Posterior cingulate gyrus (tissue), 11 donors: ENCODE measurements at regions of chr3 and their contacts with region 1.

Region 1: GRCh38 chr3:189961525-189962161 is 159.1 kb downstream of the P3H2 start:
- DNase-seq: peak; percentile 56 to 94 (median 82)

Region 2: DNA sequence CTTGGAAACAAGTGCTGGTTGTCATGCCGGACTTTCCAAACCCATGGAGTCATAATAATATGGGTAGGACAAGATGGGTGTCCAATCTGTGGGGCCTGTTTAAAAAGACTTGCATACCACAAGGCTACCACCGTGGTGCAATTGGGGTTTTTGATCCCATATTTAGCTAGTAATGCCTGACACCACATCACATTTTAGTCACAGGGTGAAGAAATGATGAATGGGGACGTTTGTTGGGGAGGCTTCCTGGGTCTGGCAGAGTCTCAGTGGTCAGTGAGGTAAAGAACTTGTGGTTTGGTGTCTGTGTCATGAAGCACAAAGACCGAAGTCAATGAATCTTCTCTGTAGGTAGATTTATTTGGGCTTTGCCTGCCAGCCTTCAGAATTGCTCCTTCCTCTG is 128.1 kb after region 1 on chr3:
- intact Hi-C with region 1: loop called (anchors 10 kb)
- DNase-seq: no peak

Region 3: GRCh38 chr3:190205739-190206138 is 244.1 kb after region 1 on chr3:
- intact Hi-C with region 1: loop called (anchors 2 kb)
- DNase-seq: no peak

Region 4: GRCh38 chr3:190424478-190425439 is 463.1 kb after region 1 on chr3:
- intact Hi-C with region 1: loop called (anchors 10 kb)
- DNase-seq: peak in 7 of 10 donors; percentile 18 to 83 (median 32)

Region 5: DNA sequence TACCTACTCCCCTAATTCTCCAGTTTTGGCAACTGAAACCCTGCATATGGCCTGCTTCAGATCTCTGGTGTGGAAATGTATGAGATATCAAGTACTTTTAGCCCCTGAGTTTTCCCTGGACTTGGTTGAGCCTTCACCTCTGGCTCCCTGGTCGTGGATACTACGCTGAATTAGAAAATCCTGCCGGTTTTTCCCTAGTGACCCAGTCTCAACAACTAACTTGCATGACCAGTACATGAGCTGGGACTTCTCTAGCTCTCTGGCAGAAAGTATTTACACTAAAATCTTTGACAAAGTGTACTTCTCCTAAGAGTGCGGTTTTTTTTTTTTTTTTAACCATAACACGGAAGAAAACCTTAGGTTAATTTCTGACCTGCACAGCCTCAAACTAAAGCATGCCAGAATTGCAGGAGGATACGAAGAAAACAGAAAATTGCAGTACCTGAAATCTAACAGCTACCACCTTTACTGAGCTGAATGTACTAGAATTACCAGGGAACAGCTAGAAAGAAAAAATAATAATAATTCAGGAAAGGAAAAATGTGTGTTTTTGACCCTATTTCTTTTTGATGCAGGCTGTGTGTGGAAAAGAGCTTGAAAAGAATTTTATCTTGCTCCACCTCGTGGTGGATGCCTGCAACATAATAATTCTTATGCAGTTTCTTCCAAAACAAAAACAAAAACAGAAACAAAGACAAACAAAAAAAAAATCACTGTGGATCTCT is 735.3 kb after region 1 on chr3:
- intact Hi-C with region 1: loop called (anchors 10 kb)
- DNase-seq: no peak